ENCODE measurements at regions of chr10 and their contacts with region 1.

Region 1: GRCh38 chr10:108966005-108966404 is 957.3 kb downstream of the XPNPEP1 start:
- DNase-seq: no peak
- H3K4me3 Mint-ChIP-seq: no peak overlapping the region
- H3K27ac Mint-ChIP-seq: no peak overlapping the region
- H3K4me1 Mint-ChIP-seq: no peaks in the 10 kb centered on the region
- H3K27me3 Mint-ChIP-seq: no peaks in the 10 kb centered on the region

Region 2: GRCh38 chr10:108789919-108790318 is 176.1 kb before region 1 on chr10:
- intact Hi-C with region 1: no loop called
- DNase-seq: no peak
- H3K4me3 Mint-ChIP-seq: no peak overlapping the region
- H3K27ac Mint-ChIP-seq: no peak overlapping the region
- H3K4me1 Mint-ChIP-seq: no peaks in the 10 kb centered on the region
- H3K27me3 Mint-ChIP-seq: no peaks in the 10 kb centered on the region

Region 3: GRCh38 chr10:108937556-108937955 is 28.4 kb before region 1 on chr10:
- intact Hi-C with region 1: loop called (anchors 1 kb)
- DNase-seq: no peak
- H3K4me3 Mint-ChIP-seq: no peak overlapping the region
- H3K27ac Mint-ChIP-seq: no peak overlapping the region
- H3K4me1 Mint-ChIP-seq: no peaks in the 10 kb centered on the region
- H3K27me3 Mint-ChIP-seq: no peaks in the 10 kb centered on the region